Heart right ventricle (tissue), 16 donors: ENCODE measurements at regions of chr9 and their contacts with region 1.

Region 1: DNA sequence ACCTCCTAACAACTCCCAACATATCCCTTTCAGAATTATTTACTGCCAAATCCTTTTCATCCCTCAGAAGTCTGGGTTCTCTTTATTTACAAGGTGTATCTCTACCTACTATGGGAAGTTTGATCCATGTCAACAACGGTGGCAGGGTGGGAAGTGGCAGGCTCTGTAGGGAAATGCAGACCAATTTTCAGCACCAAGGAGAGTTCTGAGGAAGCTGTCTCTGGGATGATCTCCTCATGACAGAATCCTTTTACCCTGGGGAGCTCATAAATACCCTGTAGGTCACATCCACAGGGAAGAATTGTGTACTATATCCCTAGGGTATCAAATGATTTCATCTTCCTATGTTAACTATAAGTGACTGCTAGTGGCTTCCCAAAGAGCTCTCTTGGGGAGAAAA is 107.8 kb upstream of the NEK6 start:
- DNase-seq: no peak
- ATAC-seq: no peak
- H3K4me3 ChIP-seq: no peak overlapping the region
- H3K27ac ChIP-seq: no peak overlapping the region
- H3K4me1 ChIP-seq: no peaks in the 10 kb centered on the region
- H3K27me3 ChIP-seq: peaks cover 0 to 17% (median 9%) of the 10 kb centered on the region in 7 donors
- CTCF ChIP-seq: no peak

Region 2: DNA sequence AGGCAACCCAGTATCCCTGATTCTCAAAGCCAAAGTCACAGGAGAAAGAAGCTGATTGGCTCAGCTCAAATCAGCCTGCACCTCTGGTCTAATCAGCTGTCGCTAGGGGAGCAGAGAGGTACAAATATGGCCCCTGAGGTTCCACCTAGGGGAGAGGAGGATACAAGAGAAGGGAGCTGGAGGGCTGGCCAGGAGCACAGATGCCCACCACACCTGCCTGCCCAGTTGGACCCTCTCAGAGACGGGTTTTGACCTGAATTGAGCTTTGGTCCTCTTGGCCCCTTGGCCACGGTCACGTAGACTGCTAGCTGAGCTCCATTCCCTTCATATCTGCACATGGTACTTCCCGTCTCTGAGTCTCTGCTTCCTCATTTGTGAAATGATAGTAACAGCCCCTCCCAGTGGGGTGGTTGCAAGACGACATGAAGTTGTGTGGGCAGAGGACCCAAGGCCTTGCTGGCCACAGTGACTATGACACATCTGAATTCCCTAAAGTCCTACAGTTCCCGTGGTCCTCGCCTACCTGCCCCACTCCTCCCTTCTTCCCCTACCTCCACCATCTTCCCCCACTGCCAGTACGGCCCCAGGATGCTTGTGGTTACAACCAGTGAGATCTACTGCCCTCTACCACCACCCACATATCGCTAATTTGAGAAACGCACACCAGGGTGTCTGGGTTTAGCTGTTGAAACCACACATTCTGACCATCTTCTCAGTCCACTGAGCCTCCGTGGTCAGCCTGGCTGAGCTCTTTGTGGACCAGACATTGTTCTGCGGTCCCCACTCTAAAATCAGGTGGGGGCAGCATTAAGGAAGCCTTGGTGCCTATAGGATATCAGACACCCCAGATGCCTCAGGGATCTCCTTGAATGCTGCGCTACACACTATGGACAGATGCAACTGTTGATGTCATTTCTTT is 47.4 kb after region 1 on chr9:
- intact Hi-C with region 1: loop called in 1 of 10 experiments (anchors 10 kb)
- DNase-seq: no peak
- ATAC-seq: peak in 5 of 8 donors; percentile 42 to 67 (median 63)
- H3K4me3 ChIP-seq: peak overlapping the region in 1 of 10 donors; percentile 13
- H3K27ac ChIP-seq: peak overlapping the region in 1 of 10 donors; percentile 89
- H3K4me1 ChIP-seq: peaks cover 0 to 40% (median 0%) of the 10 kb centered on the region in 9 donors
- H3K27me3 ChIP-seq: no peaks in the 10 kb centered on the region
- CTCF ChIP-seq: peak in 1 of 9 donors; percentile 7

Region 3: DNA sequence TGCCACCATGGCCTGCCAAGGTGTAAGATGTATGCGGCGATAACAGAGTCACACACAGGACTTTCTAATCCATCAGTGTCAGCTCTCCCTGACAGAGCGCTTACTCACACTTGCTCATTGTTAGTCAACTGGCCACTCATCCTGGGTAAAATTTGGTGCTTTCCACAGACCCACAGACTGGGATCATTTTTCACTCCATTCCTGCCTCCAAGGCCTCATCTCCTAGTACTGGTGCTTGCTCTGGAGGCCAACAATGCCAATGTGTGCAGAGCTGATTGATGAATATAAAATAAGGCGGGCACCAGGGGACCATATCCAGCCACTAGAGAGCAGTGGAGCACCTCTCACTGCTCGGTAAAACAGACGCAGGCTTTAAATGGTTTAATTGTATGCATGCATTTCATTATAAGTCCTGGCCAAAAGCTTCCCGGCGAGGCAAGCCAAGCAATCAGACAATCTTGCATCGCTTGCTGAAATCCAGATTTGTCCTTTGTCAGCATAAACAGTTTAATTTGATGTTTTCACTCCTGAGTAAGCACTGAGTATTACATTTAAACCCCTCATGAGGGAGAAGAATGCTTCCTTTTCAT is 243.0 kb after region 1 on chr9:
- intact Hi-C with region 1: no loop called
- DNase-seq: no peak
- ATAC-seq: peak in 1 of 8 donors; percentile 16
- H3K4me3 ChIP-seq: no peak overlapping the region
- H3K27ac ChIP-seq: no peak overlapping the region
- H3K4me1 ChIP-seq: peaks cover 3 to 71% (median 48%) of the 10 kb centered on the region in 9 donors
- H3K27me3 ChIP-seq: no peaks in the 10 kb centered on the region
- CTCF ChIP-seq: peak in 4 of 9 donors; percentile 13 to 23 (median 16)